GM18951 (cell line): ENCODE measurements at regions of chr22 and their contacts with region 1.

Region 1: GRCh38 chr22:43385770-43386641 is 25.8 kb upstream of the MPPED1 start:
- POLR2A ChIP-seq: no peak

Region 2: GRCh38 chr22:43273902-43274484 is 112.0 kb before region 1 on chr22:
- in situ Hi-C with region 1: loop called (anchors 5 kb)
- POLR2A ChIP-seq: no peak

Region 3: GRCh38 chr22:43706151-43706550 is 320.1 kb after region 1 on chr22:
- in situ Hi-C with region 1: no loop called
- POLR2A ChIP-seq: no peak

Region 4: GRCh38 chr22:43823353-43823908 is 437.4 kb after region 1 on chr22:
- in situ Hi-C with region 1: no loop called
- POLR2A ChIP-seq: no peak

Region 5: DNA sequence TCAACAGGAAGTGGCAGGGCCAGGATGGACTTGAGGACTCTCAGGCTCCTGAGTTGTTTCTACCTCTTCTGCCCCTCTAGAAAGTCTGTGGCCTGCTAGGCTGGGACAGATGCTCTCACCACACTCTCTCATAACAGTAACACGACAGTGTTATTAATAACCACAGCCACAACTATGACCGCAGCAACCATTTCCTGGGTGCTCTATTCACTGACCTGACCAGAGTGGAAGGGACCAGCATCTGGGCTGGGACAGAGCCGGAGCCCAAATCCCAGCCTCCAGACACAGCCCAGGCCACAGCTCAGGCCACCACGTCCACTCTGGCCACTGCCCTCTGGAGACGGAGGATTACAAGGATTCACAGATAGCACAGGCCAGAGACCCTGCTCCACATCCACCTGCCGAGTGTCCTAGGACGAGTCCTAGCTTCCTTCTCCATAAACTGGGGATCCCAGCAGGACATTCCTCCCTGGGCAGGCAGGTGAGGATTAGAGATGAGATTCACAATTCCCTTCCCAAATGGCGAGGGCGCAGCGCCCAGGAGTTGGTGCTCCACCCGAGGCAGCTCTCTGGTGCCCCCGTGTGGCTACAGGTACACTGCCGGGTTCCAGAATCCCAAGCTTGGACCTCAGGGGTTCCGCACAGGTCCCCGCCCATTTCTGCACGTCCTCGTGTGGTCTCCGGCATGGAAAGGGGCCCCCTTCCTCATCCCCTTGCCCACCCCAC is 498.8 kb after region 1 on chr22:
- in situ Hi-C with region 1: loop called (anchors 25 kb)
- POLR2A ChIP-seq: no peak